Body of pancreas (tissue), 4 donors: ENCODE measurements at regions of chr16 and their contacts with region 1.

Region 1: GRCh38 chr16:10181196-10182162 is 749 bp downstream of the GRIN2A start:
- DNase-seq: peak; percentile 57 to 77 (median 68)
- ATAC-seq: peak; percentile 86
- H3K4me3 ChIP-seq: no peak overlapping the region
- H3K27ac ChIP-seq: no peak overlapping the region
- H3K4me1 ChIP-seq: peaks cover 28% of the 10 kb centered on the region
- H3K27me3 ChIP-seq: peaks cover 0 to 33% of the 10 kb centered on the region in 2 donors
- CTCF ChIP-seq: peak; percentile 89 to 98 (median 93)
- POLR2A ChIP-seq: no peak

Region 2: GRCh38 chr16:9159839-9160550 is 1021.5 kb before region 1 on chr16:
- intact Hi-C with region 1: loop called (anchors 5 kb)
- DNase-seq: peak; percentile 65 to 82 (median 72)
- ATAC-seq: peak; percentile 73
- H3K4me3 ChIP-seq: no peak overlapping the region
- H3K27ac ChIP-seq: no peak overlapping the region
- H3K4me1 ChIP-seq: no peaks in the 10 kb centered on the region
- H3K27me3 ChIP-seq: no peaks in the 10 kb centered on the region
- CTCF ChIP-seq: peak; percentile 42 to 81 (median 76)
- POLR2A ChIP-seq: no peak

Region 3: GRCh38 chr16:9258423-9259051 is 922.9 kb before region 1 on chr16:
- intact Hi-C with region 1: loop called (anchors 5 kb)
- DNase-seq: peak; percentile 30 to 66 (median 62)
- ATAC-seq: no peak
- H3K4me3 ChIP-seq: no peak overlapping the region
- H3K27ac ChIP-seq: no peak overlapping the region
- H3K4me1 ChIP-seq: peaks cover 35% of the 10 kb centered on the region
- H3K27me3 ChIP-seq: no peaks in the 10 kb centered on the region
- CTCF ChIP-seq: peak; percentile 46 to 90 (median 73)
- POLR2A ChIP-seq: peak in 1 of 3 donors; percentile 3

Region 4: DNA sequence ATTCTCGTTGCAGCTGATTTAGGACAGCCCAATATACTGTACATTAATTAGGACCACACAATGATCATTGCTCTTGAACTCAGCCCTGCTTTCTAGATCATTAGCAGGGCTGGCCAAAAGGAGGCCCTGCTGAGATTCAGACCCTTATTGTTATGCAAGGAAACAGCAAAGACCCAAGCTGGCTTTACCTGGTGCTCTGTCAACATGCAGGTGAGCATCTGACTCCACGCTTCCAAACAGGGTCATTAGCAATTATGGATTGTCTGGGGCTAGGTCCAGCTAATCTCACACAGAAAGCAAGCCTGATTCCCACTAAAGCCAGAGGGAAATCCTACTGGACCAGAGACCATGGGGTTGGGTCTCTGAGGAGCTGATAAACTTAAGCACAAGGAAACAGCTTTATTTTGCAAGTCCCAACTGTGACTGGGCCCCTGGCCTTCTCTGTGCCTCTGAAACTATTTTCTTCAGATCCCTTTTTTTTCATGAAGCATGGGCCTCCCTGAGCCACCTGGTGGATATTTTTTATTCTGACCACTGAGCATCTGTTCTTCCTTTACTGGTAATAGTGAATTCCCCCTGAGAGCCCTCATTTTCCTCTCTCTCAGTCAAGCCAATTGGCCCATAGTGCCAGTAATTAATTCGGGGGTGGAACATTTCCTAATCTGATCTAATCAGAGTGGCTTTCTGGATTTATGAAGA is 235.3 kb before region 1 on chr16:
- intact Hi-C with region 1: no loop called
- DNase-seq: no peak
- ATAC-seq: no peak
- H3K4me3 ChIP-seq: no peak overlapping the region
- H3K27ac ChIP-seq: no peak overlapping the region
- H3K4me1 ChIP-seq: no peaks in the 10 kb centered on the region
- H3K27me3 ChIP-seq: no peaks in the 10 kb centered on the region
- CTCF ChIP-seq: peak in 3 of 7 experiments; percentile 5 to 26 (median 7)
- POLR2A ChIP-seq: no peak